ENCODE measurements at regions of chr3 and their contacts with region 1.

Region 1: GRCh38 chr3:113575206-113575605 is 42.9 kb downstream of the SIDT1 start:
- DNase-seq: no peak
- H3K4me3 ChIP-seq: no peak overlapping the region
- H3K4me3 Mint-ChIP-seq: no peak overlapping the region
- H3K27ac Mint-ChIP-seq: peak overlapping the region; percentile 58
- H3K4me1 ChIP-seq: peaks cover 26% of the 10 kb centered on the region
- H3K4me1 Mint-ChIP-seq: peaks cover 32% of the 10 kb centered on the region
- H3K27me3 ChIP-seq: no peaks in the 10 kb centered on the region
- H3K27me3 Mint-ChIP-seq: no peaks in the 10 kb centered on the region
- CTCF ChIP-seq: no peak

Region 2: GRCh38 chr3:113051302-113051711 is 523.9 kb before region 1 on chr3:
- CTCF ChIA-PET with region 1: no interaction called
- POLR2A ChIA-PET with region 1: no interaction called
- intact Hi-C with region 1: loop called (anchors 5 kb)
- DNase-seq: peak; percentile 72 to 84
- H3K4me3 ChIP-seq: no peak overlapping the region
- H3K4me3 Mint-ChIP-seq: no peak overlapping the region
- H3K27ac Mint-ChIP-seq: no peak overlapping the region
- H3K4me1 ChIP-seq: no peaks in the 10 kb centered on the region
- H3K4me1 Mint-ChIP-seq: no peaks in the 10 kb centered on the region
- H3K27me3 ChIP-seq: no peaks in the 10 kb centered on the region
- H3K27me3 Mint-ChIP-seq: no peaks in the 10 kb centered on the region
- CTCF ChIP-seq: peak; percentile 78 to 91

Region 3: GRCh38 chr3:113495035-113495434 is 80.2 kb before region 1 on chr3:
- CTCF ChIA-PET with region 1: interaction called, 13 read pairs
- POLR2A ChIA-PET with region 1: no interaction called
- intact Hi-C with region 1: loop called (anchors 1 kb)
- DNase-seq: peak; percentile 41 to 42
- H3K4me3 ChIP-seq: no peak overlapping the region
- H3K4me3 Mint-ChIP-seq: no peak overlapping the region
- H3K27ac Mint-ChIP-seq: no peak overlapping the region
- H3K4me1 ChIP-seq: no peaks in the 10 kb centered on the region
- H3K4me1 Mint-ChIP-seq: no peaks in the 10 kb centered on the region
- H3K27me3 ChIP-seq: no peaks in the 10 kb centered on the region
- H3K27me3 Mint-ChIP-seq: no peaks in the 10 kb centered on the region
- CTCF ChIP-seq: peak; percentile 27 to 53

Region 4: DNA sequence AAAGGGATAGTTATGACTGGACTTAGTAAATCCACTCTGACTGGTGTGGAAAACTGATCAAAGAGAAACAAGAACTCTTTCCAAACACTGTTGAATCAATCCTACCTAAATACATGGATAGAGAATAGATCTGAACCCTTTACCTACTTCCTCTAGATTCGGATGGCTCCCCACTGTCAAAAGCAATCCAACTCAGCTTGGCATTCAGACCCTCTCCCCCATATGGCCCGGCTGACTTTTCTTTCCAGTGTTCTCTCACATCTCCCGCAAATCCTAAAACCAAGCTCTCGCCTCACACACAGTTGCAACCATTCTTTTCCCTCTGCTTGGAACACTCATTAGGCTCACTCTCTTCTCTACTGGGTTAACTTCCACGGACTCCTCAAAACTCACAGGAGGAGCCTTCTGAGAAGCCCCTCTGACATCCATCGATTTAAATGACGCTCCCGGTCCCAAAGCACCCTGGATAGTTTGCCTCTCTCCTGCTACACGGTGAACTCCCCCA is 60.9 kb before region 1 on chr3:
- CTCF ChIA-PET with region 1: interaction called, 55 read pairs
- POLR2A ChIA-PET with region 1: interaction called, 7 read pairs
- intact Hi-C with region 1: loop called (anchors 1 kb)
- DNase-seq: peak in 1 of 2 experiments; percentile 6
- H3K4me3 ChIP-seq: peak overlapping the region; percentile 83
- H3K4me3 Mint-ChIP-seq: no peak overlapping the region
- H3K27ac Mint-ChIP-seq: no peak overlapping the region
- H3K4me1 ChIP-seq: no peaks in the 10 kb centered on the region
- H3K4me1 Mint-ChIP-seq: peaks cover 8% of the 10 kb centered on the region
- H3K27me3 ChIP-seq: no peaks in the 10 kb centered on the region
- H3K27me3 Mint-ChIP-seq: no peaks in the 10 kb centered on the region
- CTCF ChIP-seq: no peak

Region 5: DNA sequence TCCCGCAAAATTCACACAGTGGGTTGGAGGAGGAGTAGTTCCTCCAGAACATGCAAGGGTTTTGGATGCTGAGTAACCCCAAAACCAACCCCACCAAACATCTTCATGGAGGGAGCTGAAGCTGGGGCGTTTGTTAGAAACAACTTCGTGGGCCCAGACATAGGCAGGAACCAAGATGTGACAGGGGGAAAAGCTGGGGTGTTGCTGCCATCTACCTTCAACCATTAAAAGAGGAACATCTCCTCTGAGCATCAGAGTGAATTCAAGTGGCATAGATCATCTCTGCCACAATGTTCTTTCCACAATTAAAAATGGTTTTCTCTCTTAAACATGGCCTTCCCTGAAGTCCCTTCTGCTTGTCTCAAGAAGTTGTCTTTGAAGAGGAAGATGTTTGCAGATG is 22.4 kb before region 1 on chr3:
- CTCF ChIA-PET with region 1: interaction called, 11 read pairs
- POLR2A ChIA-PET with region 1: no interaction called
- intact Hi-C with region 1: loop called (anchors 1 kb)
- DNase-seq: no peak
- H3K4me3 ChIP-seq: no peak overlapping the region
- H3K4me3 Mint-ChIP-seq: no peak overlapping the region
- H3K27ac Mint-ChIP-seq: peak overlapping the region; percentile 77
- H3K4me1 ChIP-seq: peaks cover 39% of the 10 kb centered on the region
- H3K4me1 Mint-ChIP-seq: peaks cover 29% of the 10 kb centered on the region
- H3K27me3 ChIP-seq: no peaks in the 10 kb centered on the region
- H3K27me3 Mint-ChIP-seq: no peaks in the 10 kb centered on the region
- CTCF ChIP-seq: no peak